Common myeloid progenitor, CD34-positive (primary cell): ENCODE measurements at regions of chr15 and their contacts with region 1.

Region 1: GRCh38 chr15:41284427-41285177 is 47.8 kb downstream of the OIP5 start:
- DNase-seq: no peak
- H3K4me3 ChIP-seq: peak overlapping the region; percentile 93 to 100 (median 99)
- H3K27ac ChIP-seq: peak overlapping the region; percentile 84 to 92
- H3K4me1 ChIP-seq: peaks cover 10 to 24% (median 15%) of the 10 kb centered on the region in 4 experiments
- H3K27me3 ChIP-seq: no peaks in the 10 kb centered on the region

Region 2: DNA sequence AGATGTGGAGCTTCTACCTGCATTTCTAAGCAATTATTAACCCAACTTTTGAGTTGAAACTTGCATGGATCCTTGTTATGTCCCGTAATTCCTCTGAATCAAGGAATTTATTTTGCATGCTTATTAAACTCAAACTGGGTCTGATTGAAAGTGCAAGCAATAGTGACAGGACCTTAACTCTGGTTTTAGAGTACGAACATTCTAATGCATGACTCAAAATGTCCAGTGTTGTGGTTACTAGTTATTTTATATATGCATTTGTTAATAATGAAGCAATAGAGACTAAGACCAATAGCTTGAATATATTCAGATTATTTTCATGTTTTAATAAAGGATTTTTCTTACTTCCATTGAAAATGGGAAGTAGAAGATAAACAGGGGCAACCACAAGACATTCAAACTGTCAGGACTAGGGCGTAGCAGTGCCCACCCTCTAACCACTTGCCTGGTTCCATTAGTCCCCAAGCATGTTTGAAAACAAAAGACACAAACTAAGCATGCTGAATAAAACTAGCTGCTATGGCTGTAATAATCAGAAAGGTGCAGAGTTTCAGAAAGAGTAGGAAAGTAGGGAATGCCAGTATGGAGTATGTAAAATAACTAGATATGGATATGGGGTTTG is 19.7 kb after region 1 on chr15:
- CTCF ChIA-PET with region 1: interaction called, 13 read pairs
- POLR2A ChIA-PET with region 1: no interaction called
- DNase-seq: peak; percentile 48 to 88 (median 82)
- H3K4me3 ChIP-seq: peak overlapping the region in 4 of 7 experiments; percentile 0 to 54 (median 20)
- H3K27ac ChIP-seq: peak overlapping the region; percentile 9 to 60
- H3K4me1 ChIP-seq: peaks cover 5 to 34% (median 17%) of the 10 kb centered on the region in 4 experiments
- H3K27me3 ChIP-seq: no peaks in the 10 kb centered on the region

Region 3: GRCh38 chr15:41331833-41332787 is 47.5 kb after region 1 on chr15 and contains the start of gene OIP5:
- CTCF ChIA-PET with region 1: interaction called, 40 read pairs
- POLR2A ChIA-PET with region 1: interaction called, 3 read pairs
- DNase-seq: peak; percentile 100
- H3K4me3 ChIP-seq: peak within 1 kb of the TSS; percentile 58 to 99 (median 94)
- H3K27ac ChIP-seq: peak within 1 kb of the TSS; percentile 68 to 91
- H3K4me1 ChIP-seq: peaks cover 3 to 27% (median 16%) of the 10 kb centered on the region in 4 experiments
- H3K27me3 ChIP-seq: no peaks in the 10 kb centered on the region